ENCODE measurements at regions of chr6 and their contacts with region 1.

Region 1: DNA sequence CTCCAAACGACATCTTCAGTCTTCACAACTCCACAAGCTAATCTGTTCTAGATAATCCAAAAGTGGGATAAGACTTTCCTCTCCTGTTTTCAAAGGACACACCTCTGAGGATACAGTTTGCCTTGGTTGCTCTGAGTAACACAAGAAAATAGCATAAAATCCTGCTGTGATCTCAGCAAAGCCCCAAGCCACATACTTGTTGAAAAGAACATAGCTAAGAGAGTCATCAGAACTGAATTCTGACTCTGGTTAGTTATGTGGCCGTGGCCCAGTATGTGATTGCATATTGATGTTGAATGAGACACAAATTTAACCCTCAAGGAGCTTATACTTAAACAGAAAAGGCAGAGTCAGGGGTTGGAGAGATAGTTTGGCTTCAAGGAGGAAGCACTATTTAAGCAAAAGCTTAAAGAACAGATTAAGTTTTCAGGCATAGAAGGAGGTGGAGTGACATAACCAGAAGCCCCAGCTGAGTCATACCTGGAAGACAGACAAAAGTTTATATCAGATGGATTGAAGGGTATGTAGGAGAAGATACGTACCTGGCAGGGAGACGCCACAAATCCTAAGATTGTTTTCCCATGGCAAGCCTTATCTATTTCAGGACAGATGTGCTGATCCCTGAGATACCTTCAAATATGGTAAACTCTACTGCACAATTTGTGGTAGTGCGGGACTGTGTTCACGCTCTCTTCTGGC is 41.2 kb downstream of the OPN5 start:
- DNase-seq: no peak
- H3K4me3 ChIP-seq: no peak overlapping the region
- H3K27ac ChIP-seq: no peak overlapping the region
- H3K4me1 ChIP-seq: no peaks in the 10 kb centered on the region
- H3K27me3 ChIP-seq: no peaks in the 10 kb centered on the region
- CTCF ChIP-seq: no peak
- EP300 ChIP-seq: no peak
- POLR2A ChIP-seq: no peak

Region 2: GRCh38 chr6:48206091-48206490 is 383.1 kb after region 1 on chr6:
- intact Hi-C with region 1: loop called in 1 of 4 experiments (anchors 5 kb)
- DNase-seq: no peak
- H3K4me3 ChIP-seq: no peak overlapping the region
- H3K27ac ChIP-seq: no peak overlapping the region
- H3K4me1 ChIP-seq: no peaks in the 10 kb centered on the region
- H3K27me3 ChIP-seq: no peaks in the 10 kb centered on the region
- CTCF ChIP-seq: no peak
- EP300 ChIP-seq: no peak
- POLR2A ChIP-seq: no peak